Common myeloid progenitor, CD34-positive (primary cell): ENCODE measurements at regions of chr3 and their contacts with region 1.

Region 1: GRCh38 chr3:37453393-37454389 is 279.3 kb upstream of the LRRFIP2 start:
- DNase-seq: peak in 2 of 3 donors; percentile 44 to 53
- H3K4me3 ChIP-seq: peak overlapping the region; percentile 32 to 95 (median 74)
- H3K27ac ChIP-seq: peak overlapping the region in 1 of 2 experiments; percentile 69
- H3K4me1 ChIP-seq: peaks cover 32 to 68% (median 60%) of the 10 kb centered on the region in 4 experiments
- H3K27me3 ChIP-seq: peaks cover 0 to 4% (median 0%) of the 10 kb centered on the region in 5 experiments

Region 2: GRCh38 chr3:37320276-37320675 is 133.4 kb before region 1 on chr3:
- CTCF ChIA-PET with region 1: no interaction called
- POLR2A ChIA-PET with region 1: no interaction called
- DNase-seq: no peak
- H3K4me3 ChIP-seq: no peak overlapping the region
- H3K27ac ChIP-seq: no peak overlapping the region
- H3K4me1 ChIP-seq: peaks cover 0 to 4% (median 0%) of the 10 kb centered on the region in 4 experiments
- H3K27me3 ChIP-seq: no peaks in the 10 kb centered on the region

Region 3: GRCh38 chr3:37479981-37480380 is 26.3 kb after region 1 on chr3:
- CTCF ChIA-PET with region 1: interaction called, 18 read pairs
- POLR2A ChIA-PET with region 1: interaction called, 11 read pairs
- DNase-seq: peak in 2 of 3 donors; percentile 36 to 56
- H3K4me3 ChIP-seq: no peak overlapping the region
- H3K27ac ChIP-seq: no peak overlapping the region
- H3K4me1 ChIP-seq: peaks cover 24 to 71% (median 45%) of the 10 kb centered on the region in 4 experiments
- H3K27me3 ChIP-seq: no peaks in the 10 kb centered on the region

Region 4: DNA sequence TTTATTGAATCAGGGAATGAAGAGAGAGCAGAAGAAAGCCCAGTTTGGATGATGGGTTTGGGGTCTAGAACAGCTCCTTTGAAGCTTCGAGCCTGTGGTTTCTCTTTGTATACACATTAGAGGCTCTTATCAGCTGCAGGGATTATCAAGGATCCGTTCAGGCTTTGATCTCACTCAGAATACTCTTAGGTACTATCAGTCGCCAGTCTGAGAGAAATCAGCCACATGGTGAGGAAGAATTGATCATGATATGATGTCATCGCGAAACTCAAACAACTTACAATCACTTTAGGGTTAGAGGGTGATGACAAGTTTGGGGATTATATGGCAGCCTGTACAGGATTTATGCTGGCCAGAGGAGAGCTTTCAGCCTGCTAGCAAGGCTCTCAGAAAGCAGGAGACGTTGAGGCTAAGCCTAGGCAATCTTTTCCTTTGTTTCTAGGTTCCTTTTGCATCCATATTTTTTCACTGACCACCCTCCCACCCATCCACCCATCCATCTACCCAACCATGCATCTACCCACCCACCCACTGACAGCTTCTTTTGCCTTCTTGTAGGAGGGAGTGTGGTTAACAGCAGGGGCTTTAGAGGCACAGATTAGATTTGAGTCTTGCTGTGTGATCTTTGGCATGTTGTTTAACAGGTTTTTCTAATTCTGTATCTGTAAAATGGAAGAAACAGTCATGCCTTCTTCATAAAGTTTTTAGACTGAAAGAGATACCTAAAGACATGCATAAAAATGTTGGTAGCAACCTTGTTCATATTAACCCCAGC is 51.1 kb after region 1 on chr3:
- CTCF ChIA-PET with region 1: interaction called, 11 read pairs
- POLR2A ChIA-PET with region 1: no interaction called
- DNase-seq: no peak
- H3K4me3 ChIP-seq: no peak overlapping the region
- H3K27ac ChIP-seq: no peak overlapping the region
- H3K4me1 ChIP-seq: peaks cover 4 to 27% (median 23%) of the 10 kb centered on the region in 4 experiments
- H3K27me3 ChIP-seq: no peaks in the 10 kb centered on the region